Activated naive CD4-positive, alpha-beta T cell treated with anti-CD3 and anti-CD28 coated beads for 36 hours (primary cell): ENCODE measurements at regions of chr12 and their contacts with region 1.

Region 1: DNA sequence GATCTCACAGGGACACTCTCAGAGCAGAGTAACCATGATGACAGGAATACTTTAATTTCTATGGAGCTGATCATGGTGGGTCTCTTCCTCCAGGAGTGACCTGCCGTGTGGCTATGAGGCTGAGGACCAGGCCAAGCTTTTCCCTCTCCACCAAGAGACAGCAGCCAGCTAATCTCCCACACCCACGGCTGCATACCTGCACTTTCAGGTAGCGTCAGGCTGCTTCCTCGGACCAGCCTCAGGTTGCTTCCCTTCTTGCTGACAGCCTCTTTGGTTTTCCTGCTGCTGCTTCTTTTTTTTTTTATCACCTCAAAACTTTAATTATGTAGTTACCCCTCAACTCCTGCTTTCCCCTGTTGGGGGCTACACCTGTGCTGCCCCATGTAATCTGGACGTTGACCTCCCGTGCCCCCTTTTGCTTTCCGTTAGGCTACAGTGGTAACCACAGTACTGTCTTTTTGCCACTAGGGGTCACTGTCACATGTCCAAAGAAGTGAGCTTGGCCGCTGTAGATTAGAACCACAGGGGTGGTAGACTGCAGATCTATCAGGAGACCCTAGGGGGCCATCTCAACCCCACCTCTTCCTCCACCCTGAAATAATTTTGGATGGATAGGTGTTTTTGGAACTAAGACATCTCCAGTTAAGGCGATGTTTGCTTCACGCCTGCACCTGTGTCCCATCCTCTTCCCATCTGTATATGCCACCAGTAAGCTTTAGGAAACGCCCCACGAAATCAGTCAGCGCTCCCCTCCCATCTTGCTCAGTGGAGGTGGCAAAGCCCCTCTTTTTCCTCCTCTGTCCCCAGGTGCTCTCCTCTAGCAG is 7.8 kb upstream of the PIP4K2C start:
- DNase-seq: peak; percentile 82
- H3K4me3 Mint-ChIP-seq: no peak overlapping the region
- H3K27ac Mint-ChIP-seq: no peak overlapping the region
- H3K4me1 Mint-ChIP-seq: no peaks in the 10 kb centered on the region
- H3K27me3 Mint-ChIP-seq: peaks cover 3% of the 10 kb centered on the region

Region 2: DNA sequence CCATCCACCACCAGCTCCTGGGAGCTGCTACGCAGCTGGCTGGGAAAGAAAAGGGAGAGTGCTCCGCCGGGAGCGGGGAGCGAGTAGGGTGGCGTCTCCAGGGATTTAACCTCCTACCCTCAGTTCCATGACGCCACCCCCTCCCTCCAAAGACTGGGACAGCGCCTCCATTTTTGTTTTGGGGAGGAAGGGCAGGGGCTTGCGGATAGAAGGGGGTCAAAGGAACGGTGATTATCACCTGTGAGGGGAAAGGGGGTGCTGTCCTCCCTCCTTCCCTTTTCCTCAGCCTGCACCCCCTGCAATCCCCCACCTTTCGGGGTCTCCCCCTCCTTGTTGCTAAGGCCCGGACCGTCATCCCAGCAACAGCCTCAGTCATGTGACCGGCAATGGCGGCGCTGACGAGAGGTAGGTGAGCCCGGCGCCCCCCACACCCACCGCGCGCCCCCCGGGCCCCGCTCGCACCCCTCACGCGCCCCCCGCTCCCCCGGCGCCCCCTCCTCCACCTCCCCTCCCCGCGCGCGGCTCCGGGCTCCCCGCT is 21.3 kb after region 1 on chr12 and contains the start of gene DTX3:
- CTCF ChIA-PET with region 1: interaction called, 11 read pairs
- intact Hi-C with region 1: no loop called
- DNase-seq: peak; percentile 62
- H3K4me3 Mint-ChIP-seq: peak within 1 kb of the TSS; percentile 77
- H3K27ac Mint-ChIP-seq: peak within 1 kb of the TSS; percentile 63
- H3K4me1 Mint-ChIP-seq: peaks cover 22% of the 10 kb centered on the region
- H3K27me3 Mint-ChIP-seq: no peaks in the 10 kb centered on the region
- total RNA-seq, gene DTX3: 15.8 to 16.2 TPM

Region 3: GRCh38 chr12:57621497-57622292 is 38.5 kb after region 1 on chr12:
- CTCF ChIA-PET with region 1: interaction called, 101 read pairs
- intact Hi-C with region 1: loop called (anchors 1 kb)
- DNase-seq: peak; percentile 65
- H3K4me3 Mint-ChIP-seq: peak overlapping the region; percentile 71
- H3K27ac Mint-ChIP-seq: no peak overlapping the region
- H3K4me1 Mint-ChIP-seq: peaks cover 27% of the 10 kb centered on the region
- H3K27me3 Mint-ChIP-seq: peaks cover 86% of the 10 kb centered on the region

Region 4: GRCh38 chr12:57632694-57633477 is 49.7 kb after region 1 on chr12 and contains the start of gene B4GALNT1:
- CTCF ChIA-PET with region 1: interaction called, 41 read pairs
- intact Hi-C with region 1: loop called (anchors 1 kb)
- DNase-seq: peak; percentile 65
- H3K4me3 Mint-ChIP-seq: peak within 1 kb of the TSS; percentile 73
- H3K27ac Mint-ChIP-seq: no peak within 1 kb of the TSS
- H3K4me1 Mint-ChIP-seq: peaks cover 8% of the 10 kb centered on the region
- H3K27me3 Mint-ChIP-seq: peaks cover 52% of the 10 kb centered on the region
- total RNA-seq, gene B4GALNT1: 1.4 to 1.8 TPM

Region 5: GRCh38 chr12:57744777-57745484 is 161.7 kb after region 1 on chr12 and contains the start of gene TSPAN31:
- CTCF ChIA-PET with region 1: interaction called, 21 read pairs
- intact Hi-C with region 1: loop called (anchors 1 kb)
- DNase-seq: peak; percentile 99
- H3K4me3 Mint-ChIP-seq: peak within 1 kb of the TSS; percentile 85
- H3K27ac Mint-ChIP-seq: peak within 1 kb of the TSS; percentile 94
- H3K4me1 Mint-ChIP-seq: peaks cover 40% of the 10 kb centered on the region
- H3K27me3 Mint-ChIP-seq: no peaks in the 10 kb centered on the region
- total RNA-seq, gene TSPAN31: 6.4 to 7.7 TPM